Left ventricle myocardium superior (tissue), 1 donor: ENCODE measurements at regions of chr14 and their contacts with region 1.

Region 1: GRCh38 chr14:23454445-23454856 is 15.1 kb upstream of the NGDN start:
- DNase-seq: no peak
- ATAC-seq: no peak

Region 2: DNA sequence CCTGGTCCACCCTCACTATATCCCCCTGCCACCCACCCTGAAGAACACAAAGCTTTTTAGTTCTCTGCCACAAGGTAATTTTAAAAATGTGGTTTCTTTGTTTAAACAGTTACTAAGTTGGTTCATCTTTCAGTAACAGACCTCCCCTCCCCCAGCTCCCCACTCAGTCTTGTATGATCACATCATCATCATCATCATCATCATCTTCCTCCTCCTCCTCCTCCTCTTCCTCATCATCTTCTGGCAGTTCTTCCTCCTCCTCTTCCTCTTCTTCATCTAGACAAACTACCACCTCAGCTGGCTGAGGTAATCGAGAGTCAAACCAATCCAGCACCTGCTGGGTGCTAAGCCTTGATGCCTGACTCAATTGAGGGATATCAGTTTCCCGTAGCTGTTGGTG is 179.0 kb before region 1 on chr14:
- intact Hi-C with region 1: no loop called
- DNase-seq: no peak
- ATAC-seq: no peak

Region 3: GRCh38 chr14:23320774-23321571 is 133.5 kb before region 1 on chr14 and contains the start of gene PABPN1:
- intact Hi-C with region 1: loop called (anchors 10 kb)
- DNase-seq: peak; percentile 98
- ATAC-seq: peak; percentile 94
- total RNA-seq, gene PABPN1: 76.8 TPM